ENCODE measurements at regions of chr9 and their contacts with region 1.

Region 1: DNA sequence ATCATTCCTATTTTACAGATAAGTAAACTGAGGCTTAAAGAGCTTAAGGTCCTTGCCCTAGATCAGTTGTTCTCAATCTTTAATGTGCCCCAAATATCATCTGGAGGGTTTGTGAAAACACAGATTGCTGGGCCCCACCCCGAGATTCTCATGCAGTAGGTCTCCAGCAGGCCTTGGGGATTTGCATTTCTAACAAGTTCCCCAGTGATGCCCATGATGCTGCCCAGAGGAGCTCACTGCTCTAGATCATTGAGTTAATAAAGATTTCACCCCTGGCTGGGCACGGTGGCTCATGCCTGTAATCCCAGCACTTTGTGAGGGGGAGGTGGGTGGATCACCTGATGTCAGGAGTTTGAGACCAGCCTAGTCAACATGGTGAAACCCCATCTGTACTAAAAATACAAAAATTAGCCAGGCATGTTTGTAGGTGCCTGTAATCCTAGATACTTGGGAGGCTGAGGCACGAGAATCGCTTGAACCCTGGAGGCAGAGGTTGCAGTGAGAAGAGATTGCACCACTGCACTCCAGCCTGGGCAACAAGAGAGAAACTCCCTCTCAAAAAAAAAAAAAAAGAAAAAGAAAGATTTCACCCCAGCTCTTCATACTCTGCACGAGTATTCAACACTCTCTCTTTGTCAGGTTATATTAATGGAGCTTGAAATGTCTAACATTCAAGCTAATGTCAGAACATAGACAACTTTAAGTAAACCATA is 42.7 kb upstream of the RAD23B start:
- DNase-seq: no peak
- ATAC-seq: no peak
- H3K4me3 ChIP-seq: no peak overlapping the region
- H3K27ac ChIP-seq: no peak overlapping the region
- H3K4me1 ChIP-seq: no peaks in the 10 kb centered on the region
- H3K27me3 ChIP-seq: no peaks in the 10 kb centered on the region

Region 2: GRCh38 chr9:107340920-107341632 is 100.7 kb after region 1 on chr9:
- intact Hi-C with region 1: loop called in 1 of 2 experiments (anchors 2 kb)
- DNase-seq: peak; percentile 78 to 91
- ATAC-seq: peak; percentile 55
- H3K4me3 ChIP-seq: no peak overlapping the region
- H3K27ac ChIP-seq: no peak overlapping the region
- H3K4me1 ChIP-seq: no peaks in the 10 kb centered on the region
- H3K27me3 ChIP-seq: no peaks in the 10 kb centered on the region

Measured in aorta (tissue), 5 donors.